Esophagus squamous epithelium (tissue), 5 donors: ENCODE measurements at regions of chr4 and their contacts with region 1.

Region 1: DNA sequence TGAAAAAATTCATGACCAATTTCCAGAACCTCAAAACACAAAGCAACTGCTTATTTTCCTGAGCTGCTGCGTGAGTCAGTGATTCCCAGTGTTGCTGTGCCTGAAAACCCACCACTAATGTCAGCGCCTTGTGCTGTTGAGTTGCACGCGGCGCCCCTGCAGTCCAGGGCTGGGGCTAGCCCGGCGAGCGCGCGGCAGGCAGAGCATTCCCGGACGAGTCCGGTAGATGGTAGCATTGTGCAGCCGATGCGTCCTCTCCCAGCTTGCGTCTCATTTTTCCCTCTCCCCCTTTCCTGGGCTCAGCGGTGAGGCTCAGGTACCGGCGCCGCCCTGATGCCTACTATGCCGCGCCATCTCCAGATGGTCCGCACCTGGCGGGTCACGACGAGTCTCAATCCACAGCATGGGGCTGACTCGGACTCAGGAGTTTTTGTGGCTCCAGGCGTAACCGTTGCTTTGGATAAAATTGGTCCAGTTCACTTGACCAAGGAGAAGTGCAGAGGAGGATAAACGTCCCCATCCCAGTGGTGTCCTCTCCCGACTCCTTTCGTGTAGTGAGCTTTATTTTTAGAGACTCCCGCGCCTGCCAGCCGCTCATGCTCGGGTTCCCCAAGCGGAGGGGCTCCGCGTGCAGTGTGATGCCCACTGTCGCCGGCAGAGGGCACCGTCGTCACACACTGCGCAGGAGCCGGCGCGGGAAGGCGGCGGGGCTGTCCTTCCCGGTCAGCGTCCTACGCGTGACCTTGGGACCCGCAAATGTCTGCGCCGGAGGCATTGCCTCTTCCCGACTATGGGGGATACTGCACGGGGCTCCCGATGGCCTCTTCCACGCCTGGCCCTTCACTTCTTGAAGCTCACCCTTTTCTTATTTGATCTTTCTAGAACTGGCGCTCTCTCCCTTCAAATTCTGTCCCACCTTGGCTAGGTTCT is 53.6 kb upstream of the IGFBP7 start:
- DNase-seq: peak; percentile 8
- H3K4me3 ChIP-seq: peak overlapping the region; percentile 21 to 76 (median 54)
- H3K27ac ChIP-seq: peak overlapping the region; percentile 8 to 79 (median 69)
- H3K4me1 ChIP-seq: peaks cover 0 to 15% (median 7%) of the 10 kb centered on the region in 3 donors
- H3K27me3 ChIP-seq: peaks cover 0 to 22% (median 0%) of the 10 kb centered on the region in 4 donors
- CTCF ChIP-seq: peak; percentile 49 to 94 (median 88)
- POLR2A ChIP-seq: no peak

Region 2: GRCh38 chr4:57037982-57038604 is 125.7 kb before region 1 on chr4:
- intact Hi-C with region 1: loop called (anchors 5 kb)
- DNase-seq: no peak
- H3K4me3 ChIP-seq: no peak overlapping the region
- H3K27ac ChIP-seq: no peak overlapping the region
- H3K4me1 ChIP-seq: peaks cover 0 to 35% (median 5%) of the 10 kb centered on the region in 3 donors
- H3K27me3 ChIP-seq: no peaks in the 10 kb centered on the region
- CTCF ChIP-seq: peak; percentile 20 to 79 (median 66)
- POLR2A ChIP-seq: no peak

Region 3: GRCh38 chr4:57426779-57427395 is 263.1 kb after region 1 on chr4:
- intact Hi-C with region 1: loop called (anchors 10 kb)
- DNase-seq: no peak
- H3K4me3 ChIP-seq: no peak overlapping the region
- H3K27ac ChIP-seq: no peak overlapping the region
- H3K4me1 ChIP-seq: peaks cover 0 to 21% (median 12%) of the 10 kb centered on the region in 3 donors
- H3K27me3 ChIP-seq: peaks cover 0 to 25% (median 0%) of the 10 kb centered on the region in 4 donors
- CTCF ChIP-seq: peak; percentile 29 to 74 (median 66)
- POLR2A ChIP-seq: no peak

Region 4: DNA sequence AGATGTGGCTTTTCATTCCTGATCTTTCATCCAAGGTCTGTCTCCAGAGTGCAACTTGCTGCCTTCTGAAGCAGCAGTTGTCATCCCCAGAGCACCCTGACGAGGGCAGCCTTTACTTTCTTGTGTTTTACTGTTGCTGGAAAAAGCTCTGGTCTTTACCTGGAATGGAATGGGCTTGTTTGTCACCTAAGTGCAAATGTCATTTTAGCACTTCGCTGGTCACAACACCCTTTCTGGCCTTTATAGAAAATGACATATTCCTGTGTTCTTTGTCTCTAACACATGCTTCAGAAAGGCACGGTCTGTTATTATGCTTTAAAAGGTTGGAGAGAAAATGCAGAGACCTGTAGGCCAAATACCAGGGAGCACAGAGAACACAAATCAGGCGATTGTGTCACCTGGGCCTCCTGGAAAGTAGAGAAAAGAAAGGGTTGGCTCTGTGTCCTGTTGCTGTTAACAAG is 279.1 kb after region 1 on chr4:
- intact Hi-C with region 1: no loop called
- DNase-seq: no peak
- H3K4me3 ChIP-seq: no peak overlapping the region
- H3K27ac ChIP-seq: no peak overlapping the region
- H3K4me1 ChIP-seq: no peaks in the 10 kb centered on the region
- H3K27me3 ChIP-seq: no peaks in the 10 kb centered on the region
- CTCF ChIP-seq: peak; percentile 25 to 77 (median 64)
- POLR2A ChIP-seq: no peak